GM12878 (cell line): ENCODE measurements at regions of chr2 and their contacts with region 1.

Region 1: GRCh38 chr2:219402665-219403515 is 15.2 kb upstream of the DNPEP start:
- DNase-seq: no peak
- ATAC-seq: peak; percentile 93
- H3K4me3 ChIP-seq: no peak overlapping the region
- H3K27ac ChIP-seq: no peak overlapping the region
- H3K4me1 ChIP-seq: no peaks in the 10 kb centered on the region
- H3K27me3 ChIP-seq: no peaks in the 10 kb centered on the region; a peak in 1 of 4 replicates
- CTCF ChIP-seq: peak; percentile 89 to 95 (median 91)
- EP300 ChIP-seq: no peak
- POLR2A ChIP-seq: no peak
- RAD21 ChIP-seq: peak; percentile 84

Region 2: DNA sequence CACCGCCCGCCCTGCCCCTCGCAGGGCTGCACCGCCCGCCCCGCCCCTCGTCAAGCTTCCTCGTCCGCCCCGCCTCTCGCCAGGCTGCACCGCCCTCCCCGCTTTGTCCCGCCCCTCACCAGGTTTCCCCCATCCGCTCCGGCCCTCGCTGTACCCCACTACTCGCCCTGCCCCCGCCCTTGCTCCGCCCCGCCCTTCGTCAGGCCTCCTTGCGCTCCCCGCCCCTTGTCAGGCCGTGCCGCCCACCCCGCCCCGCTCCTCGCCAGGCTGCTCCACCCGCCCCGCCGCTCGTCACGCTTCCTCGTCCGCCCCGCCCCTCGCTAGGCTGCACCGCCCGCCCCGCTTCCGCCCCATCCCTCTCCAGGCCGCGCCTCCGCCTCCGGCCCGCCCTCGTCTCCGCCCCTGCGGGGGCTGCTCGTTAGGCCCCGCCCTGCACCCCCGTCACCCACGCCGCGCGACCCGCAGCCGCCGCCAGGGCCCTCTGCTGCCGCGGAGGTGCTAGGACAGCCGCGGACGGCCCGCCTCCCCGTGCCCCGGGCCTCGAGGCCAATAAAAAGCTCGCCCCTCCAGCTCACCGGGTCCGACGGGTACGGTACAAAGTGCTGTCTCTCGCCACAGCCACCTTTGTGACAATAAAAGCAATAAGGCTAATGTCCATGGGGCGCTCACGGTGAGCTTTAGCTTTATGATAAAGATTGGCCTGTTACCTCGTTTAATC is 14.6 kb before region 1 on chr2:
- CTCF ChIA-PET with region 1: interaction called, 64 read pairs
- POLR2A ChIA-PET with region 1: interaction called, 5 read pairs
- RAD21 ChIA-PET with region 1: interaction called, 6 read pairs
- SMC1A ChIA-PET with region 1: interaction called, 7 read pairs
- in situ Hi-C with region 1: no loop called
- intact Hi-C with region 1: no loop called
- DNase-seq: peak; percentile 83
- ATAC-seq: peak; percentile 86
- H3K4me3 ChIP-seq: peak overlapping the region; percentile 8; the same call in 1 of the 2 replicates
- H3K27ac ChIP-seq: no peak overlapping the region
- H3K4me1 ChIP-seq: peaks cover 5% of the 10 kb centered on the region
- H3K27me3 ChIP-seq: no peaks in the 10 kb centered on the region
- CTCF ChIP-seq: peak; percentile 48 to 67 (median 63); a peak in 5 of 6 replicates
- EP300 ChIP-seq: no peak
- POLR2A ChIP-seq: no peak
- RAD21 ChIP-seq: no peak

Region 3: GRCh38 chr2:219433666-219434467 is 31.0 kb after region 1 on chr2:
- CTCF ChIA-PET with region 1: interaction called, 10 read pairs
- POLR2A ChIA-PET with region 1: no interaction called
- RAD21 ChIA-PET with region 1: interaction called, 3 read pairs
- SMC1A ChIA-PET with region 1: interaction called, 3 read pairs
- in situ Hi-C with region 1: no loop called
- intact Hi-C with region 1: no loop called
- DNase-seq: no peak
- ATAC-seq: peak; percentile 66
- H3K4me3 ChIP-seq: no peak overlapping the region
- H3K27ac ChIP-seq: no peak overlapping the region
- H3K4me1 ChIP-seq: no peaks in the 10 kb centered on the region
- H3K27me3 ChIP-seq: peaks cover 4 to 13% of the 10 kb centered on the region in 2 experiments; a peak in 3 of 4 replicates
- CTCF ChIP-seq: peak; percentile 13 to 31 (median 27); a peak in 3 of 6 replicates
- EP300 ChIP-seq: no peak
- POLR2A ChIP-seq: no peak
- RAD21 ChIP-seq: no peak

Region 4: GRCh38 chr2:219530048-219530963 is 127.4 kb after region 1 on chr2:
- CTCF ChIA-PET with region 1: interaction called, 83 read pairs
- POLR2A ChIA-PET with region 1: no interaction called
- RAD21 ChIA-PET with region 1: interaction called, 18 read pairs
- SMC1A ChIA-PET with region 1: interaction called, 12 read pairs
- in situ Hi-C with region 1: loop called (anchors 5 kb)
- intact Hi-C with region 1: loop called (anchors 1 kb)
- DNase-seq: no peak
- ATAC-seq: peak; percentile 98
- H3K4me3 ChIP-seq: no peak overlapping the region
- H3K27ac ChIP-seq: no peak overlapping the region
- H3K4me1 ChIP-seq: no peaks in the 10 kb centered on the region
- H3K27me3 ChIP-seq: peaks cover 6 to 16% of the 10 kb centered on the region in 2 experiments
- CTCF ChIP-seq: peak; percentile 93 to 99 (median 94); a peak in 5 of 6 replicates
- EP300 ChIP-seq: no peak
- POLR2A ChIP-seq: no peak
- RAD21 ChIP-seq: peak; percentile 99

Region 5: DNA sequence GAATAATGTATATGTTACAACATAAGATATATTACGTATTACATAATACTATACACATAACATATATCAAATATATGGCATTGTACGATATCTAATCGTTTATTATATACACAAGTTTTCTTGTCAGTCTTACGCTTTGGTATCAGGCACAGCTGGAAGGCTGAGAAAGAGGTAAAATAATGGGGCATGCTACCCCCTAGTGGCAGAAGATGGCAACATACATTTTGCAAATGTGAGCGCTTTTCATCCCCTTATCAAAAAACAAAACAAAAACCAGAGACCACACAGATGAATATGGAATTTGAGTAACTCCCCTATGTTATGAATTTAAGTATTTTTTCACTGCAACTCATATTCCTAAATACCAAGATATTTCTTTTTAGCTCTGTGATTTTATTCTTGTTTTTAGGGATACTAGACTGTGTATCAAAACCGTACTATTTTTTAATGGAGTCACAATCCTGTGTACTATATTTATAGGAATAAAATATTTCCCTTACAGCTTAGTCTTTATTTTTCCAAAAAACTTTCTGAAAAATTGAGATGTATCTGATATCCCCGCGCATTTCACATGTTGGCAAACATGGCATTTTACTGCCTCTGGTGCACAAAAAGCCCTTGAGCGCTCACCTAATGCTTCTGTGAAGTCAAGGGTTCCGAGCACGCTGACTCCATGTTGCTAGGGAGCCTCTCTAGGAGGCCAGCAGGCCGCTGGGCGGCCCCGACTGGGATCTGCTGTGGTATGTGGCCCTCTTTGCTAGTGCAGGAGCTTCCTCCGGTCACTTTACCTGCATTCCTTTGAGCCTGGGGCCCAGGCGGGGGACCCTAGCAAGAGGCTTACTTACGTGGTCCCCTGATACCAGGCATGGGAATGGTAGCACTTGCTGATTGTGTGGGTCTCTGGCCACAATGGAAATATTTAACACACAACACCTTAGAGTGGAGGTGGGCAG is 287.1 kb after region 1 on chr2:
- CTCF ChIA-PET with region 1: interaction called, 3 read pairs
- POLR2A ChIA-PET with region 1: no interaction called
- RAD21 ChIA-PET with region 1: no interaction called
- SMC1A ChIA-PET with region 1: no interaction called
- in situ Hi-C with region 1: no loop called
- intact Hi-C with region 1: loop called (anchors 5 kb)
- DNase-seq: peak; percentile 23
- ATAC-seq: peak; percentile 62
- H3K4me3 ChIP-seq: no peak overlapping the region
- H3K27ac ChIP-seq: no peak overlapping the region
- H3K4me1 ChIP-seq: peaks cover under 1% of the 10 kb centered on the region; the same call in 1 of the 2 replicates
- H3K27me3 ChIP-seq: peaks cover 0 to 2% of the 10 kb centered on the region in 2 experiments; a peak in 1 of 4 replicates
- CTCF ChIP-seq: peak; percentile 63 to 77 (median 66)
- EP300 ChIP-seq: no peak
- POLR2A ChIP-seq: no peak
- RAD21 ChIP-seq: peak; percentile 69